Left ventricle myocardium superior (tissue), 1 donor: ENCODE measurements at regions of chr9 and their contacts with region 1.

Region 1: GRCh38 chr9:114291064-114291474 is 31.8 kb upstream of the ORM1 start:
- DNase-seq: peak; percentile 81
- ATAC-seq: peak; percentile 56

Region 2: DNA sequence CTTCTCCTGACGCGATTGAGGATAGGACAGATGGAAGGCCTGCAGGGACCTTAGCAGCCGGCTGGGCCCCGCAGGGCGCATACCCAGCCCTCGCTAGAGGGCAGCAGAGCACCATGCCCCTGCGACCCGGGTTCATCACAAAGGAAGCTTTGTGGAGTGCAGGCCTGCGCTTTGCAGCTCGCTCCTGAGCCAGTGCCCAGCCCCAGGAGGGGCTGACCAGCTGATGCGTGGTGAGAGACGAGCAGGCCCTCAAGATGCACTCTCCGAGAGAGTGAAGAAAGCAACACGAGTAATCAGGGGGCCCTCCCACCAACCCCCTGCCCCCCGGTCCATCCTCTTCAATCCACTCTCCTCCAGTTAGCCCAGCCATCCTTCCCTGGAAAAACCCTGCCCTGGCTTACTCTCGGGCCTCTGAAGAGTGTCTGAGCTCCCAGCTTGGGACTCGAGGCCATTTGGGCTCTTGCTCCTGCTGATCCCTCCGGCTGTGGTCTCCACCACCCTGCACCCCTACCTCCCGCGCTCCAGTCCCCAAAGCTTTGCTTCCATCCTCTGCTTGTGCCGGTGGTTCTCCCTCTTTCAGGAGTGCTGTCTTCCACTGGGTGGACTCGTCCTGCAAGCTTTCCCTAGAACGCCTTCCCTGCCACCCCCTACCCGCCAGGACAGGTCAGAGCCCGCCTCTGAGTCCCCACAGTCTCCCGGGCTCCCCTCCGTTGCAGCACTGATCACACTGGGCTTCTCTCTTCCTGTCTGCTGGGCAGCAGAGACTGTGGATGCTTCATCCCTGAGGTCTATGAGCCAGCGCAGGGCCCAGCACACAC is 182.8 kb before region 1 on chr9:
- intact Hi-C with region 1: loop called (anchors 10 kb)
- DNase-seq: peak; percentile 90
- ATAC-seq: peak; percentile 94